Activated B cell treated with CpG ODN at 0.5 μM for 24 hours (primary cell): ENCODE measurements at regions of chr5 and their contacts with region 1.

Region 1: DNA sequence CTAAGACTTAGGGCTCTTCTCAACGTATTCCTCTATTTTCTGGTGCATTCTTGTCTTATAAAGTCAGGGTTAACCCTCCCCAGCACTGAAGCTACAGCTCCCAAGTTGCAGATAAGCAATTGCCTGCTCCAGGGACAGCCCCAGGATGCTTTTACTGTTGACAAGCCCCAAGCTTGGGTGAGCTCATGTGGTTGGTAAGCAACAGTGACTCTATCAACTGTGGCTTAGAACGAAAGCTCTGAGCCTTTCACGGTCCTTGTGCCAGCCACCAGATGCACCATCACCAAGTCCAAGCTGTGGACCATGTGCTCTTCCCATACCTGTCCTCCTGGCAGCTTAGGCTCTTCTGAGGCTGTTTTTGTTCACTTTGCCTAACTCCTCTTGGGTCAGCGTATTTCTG is 13.5 kb downstream of the ADRB2 start:
- DNase-seq: no peak
- ATAC-seq: no peak
- H3K4me3 Mint-ChIP-seq: no peak overlapping the region
- H3K27ac Mint-ChIP-seq: no peak overlapping the region
- H3K4me1 Mint-ChIP-seq: peaks cover 46% of the 10 kb centered on the region
- H3K27me3 Mint-ChIP-seq: no peaks in the 10 kb centered on the region
- CTCF ChIP-seq: no peak

Region 2: GRCh38 chr5:148858106-148858505 is 18.1 kb after region 1 on chr5:
- CTCF ChIA-PET with region 1: no interaction called
- POLR2A ChIA-PET with region 1: no interaction called
- intact Hi-C with region 1: loop called (anchors 2 kb)
- DNase-seq: no peak
- ATAC-seq: no peak
- H3K4me3 Mint-ChIP-seq: no peak overlapping the region
- H3K27ac Mint-ChIP-seq: no peak overlapping the region
- H3K4me1 Mint-ChIP-seq: peaks cover 17% of the 10 kb centered on the region
- H3K27me3 Mint-ChIP-seq: no peaks in the 10 kb centered on the region
- CTCF ChIP-seq: no peak